ENCODE measurements at regions of chr17 and their contacts with region 1.

Region 1: DNA sequence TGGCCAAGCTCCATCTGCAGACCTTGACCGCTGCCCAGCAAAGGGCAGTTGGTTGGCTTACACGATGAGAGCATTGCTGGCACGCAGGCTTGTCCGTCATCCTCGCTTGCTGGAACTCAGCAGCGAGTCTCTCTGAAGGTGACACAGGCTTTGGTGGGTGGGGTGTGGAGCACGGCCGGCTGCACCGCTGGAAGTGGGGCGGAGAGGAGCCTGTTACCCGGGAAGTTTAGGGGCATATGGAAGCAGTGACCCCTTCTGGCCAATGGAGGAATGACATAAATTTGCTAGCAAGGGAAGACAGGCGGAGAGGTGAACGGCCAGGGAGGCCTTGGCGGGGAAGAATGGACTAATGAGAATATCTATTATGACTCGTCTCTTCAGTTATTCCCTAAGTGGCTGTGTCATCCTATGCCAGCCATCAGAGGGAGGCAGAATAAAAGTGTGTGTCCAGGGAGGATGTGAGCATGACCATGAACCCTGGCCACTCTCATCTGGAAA is 65.9 kb upstream of the SDK2 start:
- DNase-seq: peak; percentile 38 to 84 (median 60)
- ATAC-seq: peak; percentile 79
- H3K4me3 ChIP-seq: no peak overlapping the region
- H3K4me3 Mint-ChIP-seq: no peak overlapping the region
- H3K27ac ChIP-seq: no peak overlapping the region
- H3K27ac Mint-ChIP-seq: peak overlapping the region; percentile 4
- H3K4me1 ChIP-seq: peaks cover 15% of the 10 kb centered on the region
- H3K4me1 Mint-ChIP-seq: peaks cover 17% of the 10 kb centered on the region
- H3K27me3 ChIP-seq: no peaks in the 10 kb centered on the region
- H3K27me3 Mint-ChIP-seq: no peaks in the 10 kb centered on the region
- CTCF ChIP-seq: peak; percentile 91

Region 2: DNA sequence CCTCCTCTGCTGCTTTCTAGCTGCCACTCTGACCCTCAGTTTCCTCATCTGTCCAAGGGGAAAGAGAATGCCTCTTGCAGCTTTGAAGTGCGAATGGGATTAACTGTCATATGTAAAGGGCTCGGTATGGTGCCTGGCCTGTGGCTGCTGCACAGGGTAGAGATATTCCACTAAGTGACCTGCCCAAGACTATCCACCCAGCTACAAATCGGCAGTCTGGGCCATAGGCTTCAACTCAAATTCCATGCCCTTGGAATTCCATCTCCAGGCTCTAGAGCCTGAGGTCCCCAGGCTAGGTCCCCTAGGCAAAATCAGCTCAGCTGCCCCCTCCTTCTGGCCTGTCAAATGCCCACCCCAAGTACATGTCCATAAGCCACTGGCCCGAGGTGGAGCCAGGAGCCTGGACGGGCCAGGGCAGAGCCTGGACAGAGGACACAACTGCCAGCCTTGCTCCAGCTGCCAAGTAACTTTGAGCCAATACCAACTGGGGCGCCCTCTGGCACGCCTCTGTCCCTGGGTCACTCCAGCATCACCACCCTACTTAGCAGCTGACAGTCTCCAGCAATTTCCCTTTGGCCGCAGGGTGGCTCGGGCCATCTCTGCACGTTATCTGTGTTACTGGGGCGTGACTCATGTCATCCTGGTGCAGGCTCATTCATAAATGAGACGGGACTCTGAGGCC is 123.1 kb before region 1 on chr17:
- CTCF ChIA-PET with region 1: no interaction called
- POLR2A ChIA-PET with region 1: no interaction called
- intact Hi-C with region 1: loop called in 1 of 2 experiments (anchors 5 kb)
- DNase-seq: no peak
- ATAC-seq: no peak
- H3K4me3 ChIP-seq: no peak overlapping the region
- H3K4me3 Mint-ChIP-seq: no peak overlapping the region
- H3K27ac ChIP-seq: no peak overlapping the region
- H3K27ac Mint-ChIP-seq: peak overlapping the region; percentile 90
- H3K4me1 ChIP-seq: peaks cover 37% of the 10 kb centered on the region
- H3K4me1 Mint-ChIP-seq: peaks cover 53% of the 10 kb centered on the region
- H3K27me3 ChIP-seq: no peaks in the 10 kb centered on the region
- H3K27me3 Mint-ChIP-seq: no peaks in the 10 kb centered on the region
- CTCF ChIP-seq: no peak

Region 3: DNA sequence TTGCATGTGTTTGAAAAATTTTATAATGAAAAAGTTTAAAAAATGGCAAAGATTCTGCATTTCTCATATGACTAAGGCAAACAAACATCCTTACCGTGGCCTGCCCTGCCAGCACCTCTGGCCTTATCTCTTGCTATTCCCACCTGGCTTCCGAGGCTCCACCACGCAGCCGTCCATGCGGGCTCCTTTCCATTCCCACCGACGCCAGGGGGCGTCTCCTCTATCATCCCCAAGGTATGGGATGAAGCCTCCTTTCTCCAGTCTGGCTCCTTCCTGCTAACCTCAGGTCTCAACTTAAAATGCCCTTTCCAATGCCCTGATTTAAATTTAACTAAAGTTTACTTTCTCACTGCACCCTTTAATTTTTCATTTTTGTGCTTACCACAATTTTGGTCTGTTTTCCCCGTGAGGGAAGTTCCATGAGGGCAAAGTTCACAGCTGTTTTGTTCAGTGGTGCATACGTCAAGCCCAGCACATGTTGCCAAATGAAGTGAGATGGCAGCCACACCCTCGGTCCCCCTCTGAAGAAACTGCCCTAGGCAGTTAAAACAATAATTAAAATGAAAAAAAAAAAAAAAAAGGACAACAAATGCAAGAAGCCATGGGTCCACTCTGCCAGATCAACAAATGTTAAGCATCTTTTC is 52.5 kb before region 1 on chr17:
- CTCF ChIA-PET with region 1: no interaction called
- POLR2A ChIA-PET with region 1: no interaction called
- intact Hi-C with region 1: no loop called
- DNase-seq: peak in 7 of 14 experiments; percentile 13 to 58 (median 42)
- ATAC-seq: no peak
- H3K4me3 ChIP-seq: no peak overlapping the region
- H3K4me3 Mint-ChIP-seq: no peak overlapping the region
- H3K27ac ChIP-seq: no peak overlapping the region
- H3K27ac Mint-ChIP-seq: no peak overlapping the region
- H3K4me1 ChIP-seq: peaks cover 3% of the 10 kb centered on the region
- H3K4me1 Mint-ChIP-seq: peaks cover 5% of the 10 kb centered on the region
- H3K27me3 ChIP-seq: peaks cover 0 to 2% of the 10 kb centered on the region in 2 experiments
- H3K27me3 Mint-ChIP-seq: no peaks in the 10 kb centered on the region
- CTCF ChIP-seq: peak; percentile 23

Region 4: DNA sequence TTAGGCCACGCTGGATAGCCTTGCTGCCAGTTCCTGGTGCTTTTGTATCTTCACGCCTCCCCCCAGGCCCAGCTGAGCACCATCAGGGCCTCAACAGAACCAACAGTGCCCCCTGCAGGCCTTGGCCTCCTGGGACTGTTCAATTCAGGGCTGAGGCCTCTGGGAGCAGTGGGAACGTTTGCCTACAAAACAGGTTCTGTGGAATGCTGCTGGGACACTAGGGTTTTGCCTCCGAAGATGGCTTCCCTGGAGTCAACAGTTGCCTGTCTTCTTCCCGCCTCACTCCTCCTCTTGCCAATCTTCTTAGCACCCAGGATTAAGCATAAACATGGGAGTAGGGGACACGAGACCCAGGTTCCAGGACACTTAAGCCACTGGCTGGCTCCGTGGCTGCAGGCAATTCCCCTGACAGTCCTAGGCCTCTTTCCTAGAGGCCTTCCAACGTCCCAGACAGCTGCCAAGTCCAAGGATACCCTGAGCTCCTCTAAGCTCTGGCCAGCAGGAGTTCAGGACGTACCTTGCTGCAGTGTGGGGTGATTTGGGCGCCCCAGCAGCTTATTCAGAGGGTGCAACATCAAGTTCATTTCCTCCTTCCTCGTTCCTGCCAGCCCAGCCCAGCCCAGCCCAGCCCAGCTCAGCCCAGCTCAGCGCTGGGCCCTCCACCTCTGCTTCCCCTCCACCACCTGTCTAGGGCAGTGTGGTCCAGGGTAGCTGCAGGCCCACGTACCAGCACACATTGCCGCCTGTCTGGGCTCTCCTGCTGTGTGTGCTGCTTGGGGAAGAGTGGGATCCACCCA is 246.7 kb after region 1 on chr17:
- CTCF ChIA-PET with region 1: no interaction called
- POLR2A ChIA-PET with region 1: no interaction called
- intact Hi-C with region 1: loop called in 1 of 2 experiments (anchors 5 kb)
- DNase-seq: peak; percentile 35 to 71 (median 54)
- ATAC-seq: peak; percentile 66
- H3K4me3 ChIP-seq: no peak overlapping the region
- H3K4me3 Mint-ChIP-seq: no peak overlapping the region
- H3K27ac ChIP-seq: no peak overlapping the region
- H3K27ac Mint-ChIP-seq: no peak overlapping the region
- H3K4me1 ChIP-seq: peaks cover 13% of the 10 kb centered on the region
- H3K4me1 Mint-ChIP-seq: peaks cover 3% of the 10 kb centered on the region
- H3K27me3 ChIP-seq: peaks cover 13 to 14% of the 10 kb centered on the region in 2 experiments
- H3K27me3 Mint-ChIP-seq: peaks cover 4% of the 10 kb centered on the region
- CTCF ChIP-seq: peak; percentile 63

Region 5: GRCh38 chr17:74099442-74100340 is 389.5 kb after region 1 on chr17:
- CTCF ChIA-PET with region 1: no interaction called
- POLR2A ChIA-PET with region 1: no interaction called
- intact Hi-C with region 1: no loop called
- DNase-seq: no peak
- ATAC-seq: no peak
- H3K4me3 ChIP-seq: no peak overlapping the region
- H3K4me3 Mint-ChIP-seq: no peak overlapping the region
- H3K27ac ChIP-seq: no peak overlapping the region
- H3K27ac Mint-ChIP-seq: no peak overlapping the region
- H3K4me1 ChIP-seq: no peaks in the 10 kb centered on the region
- H3K4me1 Mint-ChIP-seq: no peaks in the 10 kb centered on the region
- H3K27me3 ChIP-seq: peaks cover 3 to 4% of the 10 kb centered on the region in 2 experiments
- H3K27me3 Mint-ChIP-seq: peaks cover 34% of the 10 kb centered on the region
- CTCF ChIP-seq: no peak